BJ (cell line): ENCODE measurements at regions of chr16 and their contacts with region 1.

Region 1: DNA sequence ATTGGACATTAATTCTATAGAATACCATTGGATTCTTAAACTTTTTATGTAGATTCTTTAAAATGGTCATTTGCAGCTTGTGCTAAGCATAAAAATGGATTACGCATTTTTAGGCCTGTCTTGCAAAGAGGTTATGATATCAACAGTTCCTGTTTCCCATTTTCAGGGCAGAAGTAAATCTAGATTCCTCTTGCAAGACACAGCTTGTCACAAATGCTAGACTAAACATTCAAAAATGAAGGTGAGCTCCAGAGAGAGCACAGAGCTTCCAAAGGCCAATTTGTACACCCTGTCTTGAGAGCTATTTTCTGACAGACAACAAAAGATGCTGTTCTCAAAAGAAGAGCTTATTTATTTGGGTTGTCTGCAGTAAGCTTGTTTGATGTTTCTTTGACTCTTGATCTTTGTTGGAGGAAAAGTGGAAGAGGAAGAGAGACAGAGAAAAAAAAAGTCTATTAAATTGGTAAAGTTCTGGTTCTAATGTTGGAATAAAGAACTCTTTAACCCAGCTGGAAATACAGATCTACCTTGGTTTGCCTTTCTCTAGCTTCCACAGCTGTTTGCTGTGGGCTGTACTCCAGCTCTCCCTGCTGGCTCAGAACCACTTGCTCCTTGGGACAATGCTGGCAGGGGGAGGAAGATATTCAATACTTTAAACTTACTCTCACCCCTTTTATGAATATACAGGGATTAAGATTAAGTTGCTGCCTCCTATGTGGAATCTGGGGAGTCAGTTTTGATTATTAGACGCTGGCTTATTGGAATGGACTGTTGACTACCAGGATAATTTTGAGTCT is 651.8 kb downstream of the CDH11 start:
- DNase-seq: no peak
- H3K4me3 ChIP-seq: no peak overlapping the region
- H3K27me3 ChIP-seq: no peaks in the 10 kb centered on the region
- CTCF ChIP-seq: peak; percentile 37

Region 2: GRCh38 chr16:64440421-64440831 is 29.7 kb before region 1 on chr16:
- CTCF ChIA-PET with region 1: no interaction called
- POLR2A ChIA-PET with region 1: no interaction called
- DNase-seq: peak; percentile 98
- H3K4me3 ChIP-seq: no peak overlapping the region
- H3K27me3 ChIP-seq: no peaks in the 10 kb centered on the region
- CTCF ChIP-seq: no peak

Region 3: GRCh38 chr16:64543441-64543840 is 73.3 kb after region 1 on chr16:
- CTCF ChIA-PET with region 1: no interaction called
- POLR2A ChIA-PET with region 1: no interaction called
- DNase-seq: peak; percentile 15
- H3K4me3 ChIP-seq: no peak overlapping the region
- H3K27me3 ChIP-seq: no peaks in the 10 kb centered on the region
- CTCF ChIP-seq: no peak

Region 4: GRCh38 chr16:64579712-64580111 is 109.6 kb after region 1 on chr16:
- CTCF ChIA-PET with region 1: no interaction called
- POLR2A ChIA-PET with region 1: no interaction called
- DNase-seq: no peak
- H3K4me3 ChIP-seq: no peak overlapping the region
- H3K27me3 ChIP-seq: no peaks in the 10 kb centered on the region
- CTCF ChIP-seq: no peak

Region 5: GRCh38 chr16:64659866-64660265 is 189.8 kb after region 1 on chr16:
- CTCF ChIA-PET with region 1: no interaction called
- POLR2A ChIA-PET with region 1: interaction called, 13 read pairs
- DNase-seq: no peak
- H3K4me3 ChIP-seq: no peak overlapping the region
- H3K27me3 ChIP-seq: no peaks in the 10 kb centered on the region
- CTCF ChIP-seq: no peak